PC-3 (cell line): ENCODE measurements at regions of chr1 and their contacts with region 1.

Region 1: GRCh38 chr1:9292361-9293240 is at the start of gene SPSB1:
- DNase-seq: peak; percentile 78
- ATAC-seq: peak; percentile 42
- H3K4me3 ChIP-seq: peak within 1 kb of the TSS; percentile 95
- H3K27ac ChIP-seq: peak within 1 kb of the TSS; percentile 85
- H3K4me1 ChIP-seq: peaks cover 41% of the 10 kb centered on the region
- H3K27me3 ChIP-seq: no peaks in the 10 kb centered on the region
- CTCF ChIP-seq: no peak
- total RNA-seq, gene SPSB1: 18.1 and 32.9 TPM in 2 replicates

Region 2: DNA sequence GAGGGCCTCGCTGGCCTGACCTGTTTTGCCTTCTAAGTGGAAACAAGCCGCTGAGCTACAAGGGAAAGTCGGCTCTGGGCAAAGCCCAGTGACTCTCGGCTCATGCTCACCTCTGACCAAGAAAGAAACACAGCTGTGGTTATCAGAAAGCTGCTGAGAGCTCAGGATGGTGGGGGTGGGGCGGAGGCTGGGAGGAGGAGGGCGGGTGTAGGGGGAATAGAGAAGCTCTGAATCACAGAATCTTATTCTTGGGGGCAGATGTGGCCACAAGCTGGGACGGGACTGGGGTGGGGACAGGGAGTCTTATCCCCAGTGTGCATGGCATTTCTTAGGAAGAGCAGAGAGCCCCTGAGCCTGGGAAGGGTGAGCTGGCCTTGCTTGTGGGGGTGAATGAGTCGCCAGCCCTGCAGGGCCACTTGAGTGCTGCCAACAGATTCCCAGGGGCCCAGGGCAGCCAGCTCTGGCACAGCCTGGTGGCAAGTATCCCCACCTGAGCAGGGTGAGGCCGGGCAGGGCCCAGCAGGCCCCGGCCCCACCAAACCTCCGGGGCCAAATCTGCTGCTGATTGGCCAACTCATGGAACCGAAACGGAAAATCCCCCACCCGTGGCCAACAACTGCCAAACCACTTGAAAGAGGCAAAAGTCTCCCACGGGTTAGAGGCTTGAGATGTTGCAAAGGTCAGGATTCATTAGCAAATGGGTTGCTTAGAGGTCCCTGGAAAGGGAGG is 120.7 kb after region 1 on chr1:
- CTCF ChIA-PET with region 1: no interaction called
- POLR2A ChIA-PET with region 1: no interaction called
- intact Hi-C with region 1: loop called (anchors 5 kb)
- DNase-seq: peak; percentile 85
- ATAC-seq: peak; percentile 85
- H3K4me3 ChIP-seq: no peak overlapping the region; the same call in 1 of the 2 replicates
- H3K27ac ChIP-seq: peak overlapping the region; percentile 65
- H3K4me1 ChIP-seq: peaks cover 19% of the 10 kb centered on the region
- H3K27me3 ChIP-seq: no peaks in the 10 kb centered on the region
- CTCF ChIP-seq: no peak

Region 3: GRCh38 chr1:9455487-9456234 is 163.1 kb after region 1 on chr1:
- CTCF ChIA-PET with region 1: interaction called, 4 read pairs
- POLR2A ChIA-PET with region 1: interaction called, 4 read pairs
- intact Hi-C with region 1: loop called (anchors 1 kb)
- DNase-seq: peak; percentile 60
- ATAC-seq: peak; percentile 77
- H3K4me3 ChIP-seq: no peak overlapping the region
- H3K27ac ChIP-seq: no peak overlapping the region
- H3K4me1 ChIP-seq: no peaks in the 10 kb centered on the region
- H3K27me3 ChIP-seq: no peaks in the 10 kb centered on the region
- CTCF ChIP-seq: peak; percentile 93

Region 4: DNA sequence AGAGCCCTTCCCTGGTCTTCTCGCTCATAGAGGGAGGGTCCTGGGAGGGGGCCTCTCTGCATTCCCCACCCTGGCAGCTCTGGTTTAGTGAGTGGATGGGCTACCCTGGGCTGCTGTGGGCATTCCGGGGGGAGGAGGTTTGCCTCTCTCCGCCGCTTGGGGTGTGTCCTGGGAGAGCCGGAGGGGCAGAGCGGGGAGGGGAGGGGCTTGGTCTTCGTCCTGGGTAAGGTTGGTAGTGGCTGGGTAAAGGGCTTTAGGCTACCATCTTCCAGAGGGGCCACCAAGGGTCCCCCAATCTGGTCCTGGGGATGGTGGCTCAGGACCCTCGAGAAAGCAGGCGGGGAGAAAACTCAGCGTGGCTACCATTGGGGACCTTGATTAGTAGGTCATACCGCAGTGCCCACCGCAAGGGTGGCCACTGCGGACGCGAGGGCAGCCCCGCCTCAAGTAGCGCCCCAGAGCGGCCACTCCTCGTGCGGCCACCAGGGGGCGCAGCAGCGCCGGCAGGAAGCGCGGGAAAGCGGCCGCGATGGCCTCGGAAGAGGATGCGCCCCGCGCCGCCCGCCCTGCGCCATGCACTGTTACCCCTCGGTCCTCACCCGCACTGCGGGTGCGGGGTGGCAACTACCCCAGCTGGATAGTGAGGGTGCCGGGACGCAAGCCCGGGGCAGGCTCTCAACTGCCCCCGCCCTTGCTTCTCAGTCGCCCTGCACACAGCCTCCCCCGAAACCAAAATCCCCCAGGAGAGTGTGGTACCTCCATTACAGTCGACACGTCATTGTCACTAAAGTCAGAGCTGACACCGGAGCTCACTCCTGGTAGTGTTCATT is 202.5 kb after region 1 on chr1:
- CTCF ChIA-PET with region 1: interaction called, 7 read pairs
- POLR2A ChIA-PET with region 1: no interaction called
- intact Hi-C with region 1: loop called (anchors 1 kb)
- DNase-seq: peak; percentile 67
- ATAC-seq: peak; percentile 78
- H3K4me3 ChIP-seq: peak overlapping the region; percentile 26; the same call in 1 of the 2 replicates
- H3K27ac ChIP-seq: no peak overlapping the region
- H3K4me1 ChIP-seq: peaks cover 8% of the 10 kb centered on the region; the same call in 1 of the 2 replicates
- H3K27me3 ChIP-seq: no peaks in the 10 kb centered on the region
- CTCF ChIP-seq: peak; percentile 92